ENCODE measurements at regions of chr2 and their contacts with region 1.

Region 1: GRCh38 chr2:6352906-6353515 is 512.7 kb downstream of the CMPK2 start:
- DNase-seq: peak; percentile 76
- ATAC-seq: peak; percentile 92
- H3K4me3 ChIP-seq: no peak overlapping the region
- H3K27ac ChIP-seq: no peak overlapping the region
- H3K4me1 ChIP-seq: no peaks in the 10 kb centered on the region
- H3K27me3 ChIP-seq: no peaks in the 10 kb centered on the region
- CTCF ChIP-seq: peak; percentile 63

Region 2: DNA sequence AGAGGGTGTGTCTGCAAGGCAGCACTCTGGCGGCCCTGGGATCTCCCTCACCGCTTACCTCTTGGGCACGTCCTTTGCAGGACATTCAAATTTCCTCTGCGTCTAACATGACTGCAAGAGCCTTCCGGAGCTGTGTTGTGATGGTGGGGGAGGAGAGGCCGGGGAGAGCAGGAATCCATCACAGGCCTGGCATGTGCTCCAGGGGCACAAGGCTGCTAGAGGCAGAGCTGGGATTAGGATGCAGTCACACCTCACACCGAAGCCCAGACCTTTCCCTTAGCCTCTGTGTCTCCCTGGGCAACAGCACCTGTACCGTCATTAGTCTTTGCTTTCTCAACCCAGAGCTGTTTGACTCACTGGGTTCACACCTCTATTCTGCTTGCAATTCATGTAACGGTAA is 401.4 kb after region 1 on chr2:
- intact Hi-C with region 1: no loop called
- DNase-seq: no peak
- ATAC-seq: no peak
- H3K4me3 ChIP-seq: no peak overlapping the region
- H3K27ac ChIP-seq: no peak overlapping the region
- H3K4me1 ChIP-seq: peaks cover 9% of the 10 kb centered on the region
- H3K27me3 ChIP-seq: no peaks in the 10 kb centered on the region
- CTCF ChIP-seq: no peak

Region 3: GRCh38 chr2:6773007-6773693 is 420.1 kb after region 1 on chr2:
- intact Hi-C with region 1: loop called (anchors 10 kb)
- DNase-seq: peak; percentile 86
- ATAC-seq: peak; percentile 95
- H3K4me3 ChIP-seq: no peak overlapping the region
- H3K27ac ChIP-seq: no peak overlapping the region
- H3K4me1 ChIP-seq: peaks cover 4% of the 10 kb centered on the region
- H3K27me3 ChIP-seq: peaks cover 5% of the 10 kb centered on the region
- CTCF ChIP-seq: peak; percentile 96

Measured in upper lobe of right lung (tissue), 1 donor.